IMR-90 (cell line): ENCODE measurements at regions of chr10 and their contacts with region 1.

Region 1: DNA sequence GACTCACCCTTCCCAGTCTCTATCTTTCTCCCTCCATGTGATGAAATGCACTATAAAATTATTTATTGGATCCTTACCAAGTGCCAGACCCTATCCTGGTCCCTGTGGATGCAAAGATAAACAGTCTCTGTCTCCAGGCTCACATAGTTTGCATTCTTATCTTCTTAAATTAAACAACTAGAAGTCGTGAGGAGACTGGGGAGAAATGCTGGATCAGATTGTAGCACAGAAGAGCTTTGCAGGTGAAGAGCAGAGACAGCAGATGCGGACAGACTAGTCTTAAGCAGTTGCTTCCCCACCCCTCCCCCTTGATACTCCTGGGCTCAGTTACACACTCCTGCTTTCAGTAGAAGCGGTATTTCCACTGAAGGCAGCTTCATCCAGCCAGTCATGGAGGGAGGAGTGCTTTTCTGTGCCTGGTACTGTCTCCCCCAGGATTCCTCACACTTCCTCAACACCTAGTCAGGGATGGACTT is 20.8 kb upstream of the CDK1 start:
- DNase-seq: peak; percentile 6
- ATAC-seq: peak; percentile 75
- H3K4me3 ChIP-seq: no peak overlapping the region
- H3K27ac ChIP-seq: no peak overlapping the region
- H3K4me1 ChIP-seq: peaks cover 2% of the 10 kb centered on the region; the same call in 1 of the 2 replicates
- H3K27me3 ChIP-seq: no peaks in the 10 kb centered on the region; the same call in none of the 2 replicates
- CTCF ChIP-seq: no peak
- POLR2A ChIP-seq: no peak
- RAD21 ChIP-seq: no peak

Region 2: DNA sequence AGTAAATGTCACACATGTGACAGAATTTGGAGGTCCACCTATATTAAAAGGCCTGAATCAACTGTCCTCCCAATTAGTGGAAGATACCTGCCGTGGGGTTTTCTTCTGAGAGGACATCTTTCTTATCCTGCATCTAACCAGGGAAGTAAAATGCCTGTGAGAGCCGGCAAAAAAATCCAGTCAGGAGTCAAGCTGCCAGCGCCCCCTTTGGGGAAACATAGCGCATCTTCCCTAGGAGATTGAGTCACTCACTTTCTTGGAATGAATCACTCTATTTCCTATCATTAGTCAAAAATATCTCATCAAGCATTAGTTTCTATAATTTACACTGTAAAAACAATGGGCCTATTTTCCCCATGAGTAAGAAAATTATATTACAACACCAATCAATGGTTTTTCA is 301.4 kb before region 1 on chr10:
- CTCF ChIA-PET with region 1: no interaction called
- POLR2A ChIA-PET with region 1: no interaction called
- dilution Hi-C with region 1: no loop called
- in situ Hi-C with region 1: loop called (anchors 25 kb)
- intact Hi-C with region 1: no loop called
- DNase-seq: peak; percentile 27
- ATAC-seq: no peak
- H3K4me3 ChIP-seq: no peak overlapping the region
- H3K27ac ChIP-seq: no peak overlapping the region
- H3K4me1 ChIP-seq: no peaks in the 10 kb centered on the region
- H3K27me3 ChIP-seq: peaks cover 2% of the 10 kb centered on the region; the same call in 1 of the 2 replicates
- CTCF ChIP-seq: 0 out of 2 replicates have a peak, but pooled peaks have one; percentile 24
- POLR2A ChIP-seq: no peak
- RAD21 ChIP-seq: no peak

Region 3: DNA sequence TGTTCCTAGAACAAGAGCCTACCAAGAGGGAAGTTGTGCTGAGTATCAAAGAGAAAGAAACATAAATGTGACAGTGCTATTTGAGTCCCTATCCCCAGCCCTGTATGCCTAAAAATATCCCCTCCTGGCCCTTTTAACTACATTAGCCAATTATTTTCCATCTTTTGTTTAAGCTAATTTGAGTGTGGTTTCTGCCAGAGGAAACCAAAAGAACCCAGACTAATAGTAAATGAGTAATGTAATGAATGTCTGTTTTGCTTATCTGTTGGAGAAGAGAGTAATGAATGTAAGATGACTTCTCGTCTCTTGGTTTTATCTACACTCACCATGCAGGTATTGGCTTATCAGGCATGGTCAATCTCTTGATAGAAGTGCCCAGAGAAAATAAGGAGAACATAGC is 113.6 kb before region 1 on chr10:
- CTCF ChIA-PET with region 1: no interaction called
- POLR2A ChIA-PET with region 1: no interaction called
- dilution Hi-C with region 1: no loop called
- in situ Hi-C with region 1: no loop called
- intact Hi-C with region 1: no loop called
- DNase-seq: no peak
- ATAC-seq: no peak
- H3K4me3 ChIP-seq: no peak overlapping the region
- H3K27ac ChIP-seq: no peak overlapping the region
- H3K4me1 ChIP-seq: no peaks in the 10 kb centered on the region
- H3K27me3 ChIP-seq: no peaks in the 10 kb centered on the region
- CTCF ChIP-seq: no peak
- POLR2A ChIP-seq: no peak
- RAD21 ChIP-seq: no peak